Breast epithelium (tissue), 4 donors: ENCODE measurements at regions of chr18 and their contacts with region 1.

Region 1: GRCh38 chr18:78056011-78056410 is 806.4 kb downstream of the GALR1 start:
- DNase-seq: no peak
- H3K4me3 ChIP-seq: no peak overlapping the region
- H3K27ac ChIP-seq: no peak overlapping the region
- H3K4me1 ChIP-seq: no peaks in the 10 kb centered on the region
- H3K27me3 ChIP-seq: peaks cover 0 to 12% of the 10 kb centered on the region in 2 donors
- CTCF ChIP-seq: no peak
- POLR2A ChIP-seq: no peak

Region 2: DNA sequence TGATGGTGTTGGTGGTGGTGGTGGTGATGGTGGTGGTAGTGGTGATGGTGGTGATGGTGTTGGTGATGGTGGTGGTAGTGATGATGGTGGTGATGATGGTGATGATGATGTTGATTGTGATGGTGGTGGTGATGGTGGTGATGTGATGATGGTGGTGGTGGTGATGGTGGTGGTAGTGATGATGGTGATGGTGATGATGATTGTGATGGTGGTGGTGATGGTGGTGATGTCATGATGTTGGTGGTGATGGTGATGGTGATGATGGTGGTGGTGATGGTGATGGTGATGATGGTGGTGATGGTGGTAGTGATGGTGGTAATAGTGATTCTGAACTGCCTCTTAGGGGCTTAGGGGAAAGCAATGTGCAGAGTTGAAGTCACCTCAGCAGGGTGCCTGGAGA is 45.6 kb before region 1 on chr18:
- intact Hi-C with region 1: loop called (anchors 2 kb)
- DNase-seq: no peak
- H3K4me3 ChIP-seq: no peak overlapping the region
- H3K27ac ChIP-seq: no peak overlapping the region
- H3K4me1 ChIP-seq: no peaks in the 10 kb centered on the region
- H3K27me3 ChIP-seq: peaks cover 0 to 5% of the 10 kb centered on the region in 2 donors
- CTCF ChIP-seq: no peak
- POLR2A ChIP-seq: no peak

Region 3: DNA sequence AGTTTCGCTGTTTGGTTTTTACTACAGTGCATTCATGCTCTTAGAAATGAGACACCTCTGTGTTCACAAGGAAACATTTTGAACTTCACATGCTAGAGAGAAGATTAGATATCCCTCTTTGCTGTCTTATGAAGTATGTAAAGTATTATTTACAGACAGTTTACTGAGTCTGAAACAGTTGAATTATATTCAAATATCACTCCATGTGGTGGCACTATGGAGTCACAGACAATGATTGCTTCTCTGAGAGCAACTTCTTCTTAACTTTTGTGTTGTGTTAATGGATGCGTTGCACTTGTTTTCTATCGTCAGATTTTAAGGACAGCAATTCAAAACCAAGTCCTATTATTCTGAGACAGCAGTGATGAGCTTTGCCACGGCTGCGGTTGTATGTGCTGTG is 17.3 kb after region 1 on chr18:
- intact Hi-C with region 1: no loop called
- DNase-seq: no peak
- H3K4me3 ChIP-seq: no peak overlapping the region
- H3K27ac ChIP-seq: no peak overlapping the region
- H3K4me1 ChIP-seq: no peaks in the 10 kb centered on the region
- H3K27me3 ChIP-seq: peaks cover 0 to 5% of the 10 kb centered on the region in 2 donors
- CTCF ChIP-seq: no peak
- POLR2A ChIP-seq: no peak